ENCODE measurements at regions of chr13 and their contacts with region 1.

Region 1: GRCh38 chr13:74133657-74134201 is 475 bp downstream of the KLF12 start:
- DNase-seq: peak; percentile 95
- ATAC-seq: peak; percentile 48
- H3K4me3 ChIP-seq: peak overlapping the region; percentile 82
- H3K27ac ChIP-seq: peak overlapping the region; percentile 95
- H3K4me1 ChIP-seq: peaks cover 11% of the 10 kb centered on the region
- H3K27me3 ChIP-seq: no peaks in the 10 kb centered on the region
- CTCF ChIP-seq: no peak
- POLR2A ChIP-seq: peak; percentile 76; the same call in 1 of the 2 replicates
- RAD21 ChIP-seq: no peak

Region 2: DNA sequence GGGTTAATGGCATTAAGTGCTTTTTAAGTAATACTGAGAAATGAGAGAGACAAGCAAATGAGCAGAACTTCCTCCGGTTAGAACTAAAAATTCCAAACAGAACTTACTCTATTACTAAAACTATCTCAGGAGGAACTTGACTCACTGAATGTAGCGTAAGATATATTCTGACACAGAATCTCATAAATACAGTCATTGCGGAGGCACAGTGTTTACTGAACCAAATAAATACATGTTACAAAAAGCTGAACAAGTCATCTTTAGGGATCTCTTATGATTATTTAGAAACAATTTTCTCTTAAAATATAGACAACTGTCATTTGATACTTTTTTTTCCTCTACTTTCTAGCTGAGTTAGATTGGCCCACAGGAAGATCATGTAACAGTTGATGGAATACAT is 282.6 kb before region 1 on chr13:
- CTCF ChIA-PET with region 1: no interaction called
- POLR2A ChIA-PET with region 1: interaction called, 5 read pairs
- dilution Hi-C with region 1: no loop called
- in situ Hi-C with region 1: no loop called
- intact Hi-C with region 1: loop called (anchors 2 kb)
- DNase-seq: peak; percentile 81
- ATAC-seq: peak; percentile 90
- H3K4me3 ChIP-seq: no peak overlapping the region
- H3K27ac ChIP-seq: no peak overlapping the region; the same call in 1 of the 2 replicates
- H3K4me1 ChIP-seq: peaks cover 3% of the 10 kb centered on the region
- H3K27me3 ChIP-seq: no peaks in the 10 kb centered on the region
- CTCF ChIP-seq: no peak
- POLR2A ChIP-seq: no peak
- RAD21 ChIP-seq: no peak

Region 3: GRCh38 chr13:74015137-74015536 is 118.6 kb before region 1 on chr13:
- CTCF ChIA-PET with region 1: no interaction called
- POLR2A ChIA-PET with region 1: no interaction called
- dilution Hi-C with region 1: no loop called
- in situ Hi-C with region 1: no loop called
- intact Hi-C with region 1: no loop called
- DNase-seq: peak; percentile 39
- ATAC-seq: peak; percentile 49; the same call in 1 of the 2 replicates
- H3K4me3 ChIP-seq: no peak overlapping the region
- H3K27ac ChIP-seq: no peak overlapping the region
- H3K4me1 ChIP-seq: no peaks in the 10 kb centered on the region
- H3K27me3 ChIP-seq: no peaks in the 10 kb centered on the region
- CTCF ChIP-seq: peak; percentile 24
- POLR2A ChIP-seq: no peak
- RAD21 ChIP-seq: peak; percentile 35; the same call in 1 of the 2 replicates

Region 4: GRCh38 chr13:74062933-74063332 is 70.8 kb before region 1 on chr13:
- CTCF ChIA-PET with region 1: no interaction called
- POLR2A ChIA-PET with region 1: no interaction called
- dilution Hi-C with region 1: no loop called
- in situ Hi-C with region 1: no loop called
- intact Hi-C with region 1: loop called (anchors 2 kb)
- DNase-seq: peak; percentile 74
- ATAC-seq: peak; percentile 53
- H3K4me3 ChIP-seq: peak overlapping the region; percentile 31
- H3K27ac ChIP-seq: peak overlapping the region; percentile 41
- H3K4me1 ChIP-seq: peaks cover 12% of the 10 kb centered on the region
- H3K27me3 ChIP-seq: no peaks in the 10 kb centered on the region
- CTCF ChIP-seq: no peak
- POLR2A ChIP-seq: no peak
- RAD21 ChIP-seq: no peak

Region 5: GRCh38 chr13:74217811-74218210 is 84.1 kb after region 1 on chr13:
- CTCF ChIA-PET with region 1: no interaction called
- POLR2A ChIA-PET with region 1: no interaction called
- dilution Hi-C with region 1: no loop called
- in situ Hi-C with region 1: no loop called
- intact Hi-C with region 1: loop called (anchors 5 kb)
- DNase-seq: peak; percentile 97
- ATAC-seq: peak; percentile 95
- H3K4me3 ChIP-seq: no peak overlapping the region
- H3K27ac ChIP-seq: no peak overlapping the region
- H3K4me1 ChIP-seq: peaks cover 15% of the 10 kb centered on the region
- H3K27me3 ChIP-seq: no peaks in the 10 kb centered on the region
- CTCF ChIP-seq: no peak
- POLR2A ChIP-seq: no peak
- RAD21 ChIP-seq: no peak

Region 6: DNA sequence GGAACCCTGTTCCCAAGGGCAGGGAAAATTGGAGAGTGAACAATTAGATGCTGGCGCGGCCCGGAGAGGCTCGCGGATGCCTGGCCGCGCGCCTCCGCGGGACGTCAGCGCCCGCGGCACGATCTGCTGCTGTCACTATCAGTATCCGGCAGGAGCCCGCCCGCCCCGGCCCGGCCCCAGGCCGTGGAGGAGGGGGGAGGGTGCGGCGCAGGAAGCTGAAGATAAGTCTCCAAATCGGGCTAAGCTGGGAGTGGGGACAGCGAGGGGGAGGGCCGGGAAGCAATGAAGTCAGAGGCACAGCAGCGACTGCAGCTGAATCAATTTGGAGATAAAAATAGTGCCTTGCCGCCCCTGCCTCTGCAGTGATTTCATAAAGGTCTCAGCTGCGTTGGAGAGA is 442.0 kb after region 1 on chr13:
- CTCF ChIA-PET with region 1: no interaction called
- POLR2A ChIA-PET with region 1: no interaction called
- dilution Hi-C with region 1: no loop called
- in situ Hi-C with region 1: no loop called
- intact Hi-C with region 1: loop called (anchors 5 kb)
- DNase-seq: peak; percentile 33
- ATAC-seq: peak; percentile 97
- H3K4me3 ChIP-seq: peak overlapping the region; percentile 23
- H3K27ac ChIP-seq: no peak overlapping the region
- H3K4me1 ChIP-seq: peaks cover 2% of the 10 kb centered on the region; the same call in 1 of the 2 replicates
- H3K27me3 ChIP-seq: peaks cover 6% of the 10 kb centered on the region; the same call in 1 of the 2 replicates
- CTCF ChIP-seq: no peak
- POLR2A ChIP-seq: no peak
- RAD21 ChIP-seq: no peak

Region 7: GRCh38 chr13:75258159-75258782 is 1124.5 kb after region 1 on chr13:
- CTCF ChIA-PET with region 1: no interaction called
- POLR2A ChIA-PET with region 1: no interaction called
- dilution Hi-C with region 1: no loop called
- in situ Hi-C with region 1: no loop called
- intact Hi-C with region 1: loop called (anchors 5 kb)
- DNase-seq: peak; percentile 55
- ATAC-seq: peak; percentile 76
- H3K4me3 ChIP-seq: no peak overlapping the region
- H3K27ac ChIP-seq: no peak overlapping the region
- H3K4me1 ChIP-seq: no peaks in the 10 kb centered on the region
- H3K27me3 ChIP-seq: peaks cover 10% of the 10 kb centered on the region; the same call in 1 of the 2 replicates
- CTCF ChIP-seq: peak; percentile 81
- POLR2A ChIP-seq: no peak
- RAD21 ChIP-seq: peak; percentile 81

Measured in IMR-90 (cell line).